Sigmoid colon (tissue), 7 donors: ENCODE measurements at regions of chr1 and their contacts with region 1.

Region 1: GRCh38 chr1:51768971-51769588 is 109.4 kb downstream of the NRDC start:
- DNase-seq: no peak
- H3K4me3 ChIP-seq: no peak overlapping the region
- H3K27ac ChIP-seq: no peak overlapping the region
- H3K4me1 ChIP-seq: peaks cover 0 to 6% (median 0%) of the 10 kb centered on the region in 4 donors
- H3K27me3 ChIP-seq: no peaks in the 10 kb centered on the region
- CTCF ChIP-seq: peak; percentile 66 to 81 (median 78)
- EP300 ChIP-seq: no peak
- POLR2A ChIP-seq: no peak

Region 2: DNA sequence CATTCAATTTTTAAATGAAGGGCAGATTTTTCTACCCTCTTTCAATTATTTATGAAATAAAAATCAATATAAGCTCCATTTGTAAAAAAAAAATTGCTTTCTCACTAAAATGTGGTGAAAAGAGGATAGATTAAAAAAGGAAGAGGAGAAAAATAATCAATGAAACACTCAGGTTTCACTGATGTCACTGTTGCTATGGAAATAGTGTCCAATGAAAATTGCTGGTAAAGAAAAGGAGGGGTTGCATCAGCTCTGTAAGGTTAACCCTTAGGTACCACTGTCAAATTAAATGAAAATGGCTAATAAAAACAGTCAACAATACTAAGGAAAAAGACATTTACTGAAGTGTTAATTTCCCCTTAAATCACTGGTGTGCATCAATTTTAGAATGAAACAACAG is 347.1 kb before region 1 on chr1:
- intact Hi-C with region 1: loop called (anchors 5 kb)
- DNase-seq: no peak
- H3K4me3 ChIP-seq: no peak overlapping the region
- H3K27ac ChIP-seq: peak overlapping the region in 2 of 4 donors; percentile 9 to 20
- H3K4me1 ChIP-seq: peaks cover 0 to 42% (median 18%) of the 10 kb centered on the region in 4 donors
- H3K27me3 ChIP-seq: no peaks in the 10 kb centered on the region
- CTCF ChIP-seq: no peak
- EP300 ChIP-seq: no peak
- POLR2A ChIP-seq: no peak

Region 3: DNA sequence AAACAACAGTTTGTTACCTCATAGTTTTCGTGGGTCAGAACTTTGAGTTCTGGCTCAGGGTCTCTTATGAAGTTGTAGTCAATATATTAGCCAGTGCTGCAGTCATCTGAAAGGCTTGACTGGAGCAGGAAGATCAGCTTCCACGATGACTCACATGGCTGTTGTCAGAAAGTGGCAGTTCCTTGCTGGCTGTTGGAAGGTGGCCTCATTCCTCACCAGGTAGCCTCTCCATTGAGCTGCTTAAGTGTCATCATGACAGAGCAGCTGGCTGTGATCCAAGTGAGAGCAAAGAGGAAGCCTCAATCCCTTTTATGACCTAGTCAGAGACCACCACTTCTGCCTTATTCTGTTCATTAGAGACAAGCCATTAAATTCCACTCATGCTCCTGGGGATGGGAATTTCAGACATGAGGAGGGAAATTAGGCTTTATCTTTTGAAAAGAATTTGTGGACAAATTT is 146.6 kb before region 1 on chr1:
- intact Hi-C with region 1: loop called (anchors 2 kb)
- DNase-seq: peak; percentile 86
- H3K4me3 ChIP-seq: no peak overlapping the region
- H3K27ac ChIP-seq: peak overlapping the region in 3 of 4 donors; percentile 51 to 62 (median 55)
- H3K4me1 ChIP-seq: peaks cover 0 to 78% (median 68%) of the 10 kb centered on the region in 4 donors
- H3K27me3 ChIP-seq: no peaks in the 10 kb centered on the region
- CTCF ChIP-seq: no peak
- EP300 ChIP-seq: no peak
- POLR2A ChIP-seq: no peak